MCF 10A (cell line): ENCODE measurements at regions of chr19 and their contacts with region 1.

Region 1: GRCh38 chr19:41872775-41873647 is 4.1 kb upstream of the CD79A start:
- DNase-seq: peak; percentile 87
- H3K4me3 Mint-ChIP-seq: peak overlapping the region; percentile 28
- H3K27ac Mint-ChIP-seq: no peak overlapping the region
- H3K4me1 Mint-ChIP-seq: peaks cover 3% of the 10 kb centered on the region
- H3K27me3 Mint-ChIP-seq: no peaks in the 10 kb centered on the region
- CTCF ChIP-seq: peak; percentile 51

Region 2: GRCh38 chr19:41859618-41860418 is 13.2 kb before region 1 on chr19 and contains the start of gene RPS19:
- CTCF ChIA-PET with region 1: interaction called, 32 read pairs
- POLR2A ChIA-PET with region 1: interaction called, 134 read pairs
- intact Hi-C with region 1: no loop called
- DNase-seq: peak; percentile 100
- H3K4me3 Mint-ChIP-seq: peak within 1 kb of the TSS; percentile 82
- H3K27ac Mint-ChIP-seq: peak within 1 kb of the TSS; percentile 97
- H3K4me1 Mint-ChIP-seq: peaks cover 20% of the 10 kb centered on the region
- H3K27me3 Mint-ChIP-seq: peaks cover 7% of the 10 kb centered on the region
- CTCF ChIP-seq: peak; percentile 55
- total RNA-seq, gene RPS19: 3,060 and 3,357 TPM in 2 replicates

Region 3: DNA sequence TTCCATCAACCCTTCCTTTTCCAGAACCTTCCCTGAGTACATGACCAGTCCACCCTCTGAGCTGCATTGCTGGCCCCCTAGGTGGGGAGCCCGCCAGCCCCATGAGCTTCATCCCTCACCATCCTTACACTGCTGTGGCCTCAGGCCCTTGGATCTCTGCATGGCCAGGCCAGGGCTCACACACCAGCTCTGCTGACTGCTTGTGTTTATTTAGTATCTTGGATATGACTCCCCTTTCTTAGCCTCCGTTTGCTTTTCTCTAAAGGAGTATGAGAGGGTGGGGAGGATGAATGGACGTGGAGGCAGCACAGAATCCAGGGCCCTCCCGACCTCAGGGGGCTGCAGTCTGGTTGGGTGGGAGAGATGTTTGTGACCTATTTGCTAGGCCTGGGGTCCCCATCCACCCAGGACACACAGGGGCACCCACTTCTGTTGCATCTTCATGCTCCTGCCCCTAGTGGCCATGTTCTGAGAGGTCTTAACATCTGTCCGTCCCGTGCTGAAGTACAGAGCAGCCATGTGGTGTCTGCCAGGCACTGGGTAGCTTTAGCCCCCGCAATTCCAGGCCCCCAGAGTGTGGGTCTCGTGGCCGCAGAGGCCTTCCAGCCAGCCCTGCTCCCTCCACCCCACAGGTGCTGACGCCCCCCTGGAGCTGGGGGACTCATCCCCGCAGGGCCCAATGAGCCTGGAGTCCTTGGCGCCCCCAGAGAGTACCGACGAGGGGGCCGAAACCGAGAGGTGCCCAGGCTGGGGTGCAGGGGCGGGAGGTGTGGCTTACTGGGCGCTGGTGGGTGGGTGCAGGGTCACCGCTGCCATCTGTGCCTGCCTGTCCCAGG is 23.0 kb after region 1 on chr19:
- CTCF ChIA-PET with region 1: no interaction called
- POLR2A ChIA-PET with region 1: no interaction called
- intact Hi-C with region 1: loop called (anchors 2 kb)
- DNase-seq: no peak
- H3K4me3 Mint-ChIP-seq: no peak overlapping the region
- H3K27ac Mint-ChIP-seq: peak overlapping the region; percentile 20
- H3K4me1 Mint-ChIP-seq: no peaks in the 10 kb centered on the region
- H3K27me3 Mint-ChIP-seq: no peaks in the 10 kb centered on the region
- CTCF ChIP-seq: peak; percentile 12

Region 4: GRCh38 chr19:41912899-41913537 is 40.0 kb after region 1 on chr19:
- CTCF ChIA-PET with region 1: no interaction called
- POLR2A ChIA-PET with region 1: no interaction called
- intact Hi-C with region 1: no loop called
- DNase-seq: no peak
- H3K4me3 Mint-ChIP-seq: no peak overlapping the region
- H3K27ac Mint-ChIP-seq: no peak overlapping the region
- H3K4me1 Mint-ChIP-seq: peaks cover 6% of the 10 kb centered on the region
- H3K27me3 Mint-ChIP-seq: no peaks in the 10 kb centered on the region
- CTCF ChIP-seq: no peak

Region 5: GRCh38 chr19:41951686-41952172 is 78.7 kb after region 1 on chr19:
- CTCF ChIA-PET with region 1: interaction called, 5 read pairs
- POLR2A ChIA-PET with region 1: interaction called, 3 read pairs
- intact Hi-C with region 1: loop called (anchors 1 kb)
- DNase-seq: peak; percentile 79
- H3K4me3 Mint-ChIP-seq: no peak overlapping the region
- H3K27ac Mint-ChIP-seq: no peak overlapping the region
- H3K4me1 Mint-ChIP-seq: peaks cover 4% of the 10 kb centered on the region
- H3K27me3 Mint-ChIP-seq: no peaks in the 10 kb centered on the region
- CTCF ChIP-seq: peak; percentile 98

Region 6: GRCh38 chr19:41967054-41967783 is 94.2 kb after region 1 on chr19:
- CTCF ChIA-PET with region 1: no interaction called
- POLR2A ChIA-PET with region 1: no interaction called
- intact Hi-C with region 1: no loop called
- DNase-seq: no peak
- H3K4me3 Mint-ChIP-seq: no peak overlapping the region
- H3K27ac Mint-ChIP-seq: no peak overlapping the region
- H3K4me1 Mint-ChIP-seq: no peaks in the 10 kb centered on the region
- H3K27me3 Mint-ChIP-seq: peaks cover 50% of the 10 kb centered on the region
- CTCF ChIP-seq: no peak